Activated naive CD4-positive, alpha-beta T cell treated with anti-CD3 and anti-CD28 coated beads for 36 hours (primary cell): ENCODE measurements at regions of chr7 and their contacts with region 1.

Region 1: DNA sequence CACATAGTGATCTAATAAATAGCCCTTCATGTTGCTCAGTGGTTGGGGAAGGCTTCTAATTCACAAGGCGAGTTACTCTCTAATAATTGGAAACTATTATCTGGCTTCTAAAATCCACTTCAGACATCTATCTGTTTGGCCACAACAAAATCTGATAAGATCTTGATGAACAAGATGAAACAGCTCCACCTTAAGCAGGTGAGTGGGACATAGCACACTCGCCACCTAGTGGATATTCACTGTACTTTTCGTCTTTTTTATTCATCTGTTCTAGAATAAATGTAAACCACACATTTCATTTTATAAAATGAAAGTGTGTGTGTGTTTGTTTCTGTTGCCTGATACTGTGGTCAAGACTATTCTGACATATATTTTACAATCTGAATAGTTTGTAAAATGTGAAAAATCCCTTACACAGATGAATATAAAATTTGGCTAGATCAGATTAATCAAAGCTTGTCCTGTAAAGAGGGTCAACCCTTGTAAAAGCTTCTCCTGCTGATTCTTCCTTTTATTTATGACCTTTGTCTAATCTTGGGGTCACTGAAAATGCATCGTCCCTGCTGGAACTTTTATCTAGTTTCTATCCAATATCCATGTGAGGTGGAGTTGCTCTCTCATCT is 26.5 kb upstream of the CNTNAP2 start:
- DNase-seq: peak; percentile 14
- H3K4me3 Mint-ChIP-seq: no peak overlapping the region
- H3K27ac Mint-ChIP-seq: no peak overlapping the region
- H3K4me1 Mint-ChIP-seq: no peaks in the 10 kb centered on the region
- H3K27me3 Mint-ChIP-seq: no peaks in the 10 kb centered on the region

Region 2: DNA sequence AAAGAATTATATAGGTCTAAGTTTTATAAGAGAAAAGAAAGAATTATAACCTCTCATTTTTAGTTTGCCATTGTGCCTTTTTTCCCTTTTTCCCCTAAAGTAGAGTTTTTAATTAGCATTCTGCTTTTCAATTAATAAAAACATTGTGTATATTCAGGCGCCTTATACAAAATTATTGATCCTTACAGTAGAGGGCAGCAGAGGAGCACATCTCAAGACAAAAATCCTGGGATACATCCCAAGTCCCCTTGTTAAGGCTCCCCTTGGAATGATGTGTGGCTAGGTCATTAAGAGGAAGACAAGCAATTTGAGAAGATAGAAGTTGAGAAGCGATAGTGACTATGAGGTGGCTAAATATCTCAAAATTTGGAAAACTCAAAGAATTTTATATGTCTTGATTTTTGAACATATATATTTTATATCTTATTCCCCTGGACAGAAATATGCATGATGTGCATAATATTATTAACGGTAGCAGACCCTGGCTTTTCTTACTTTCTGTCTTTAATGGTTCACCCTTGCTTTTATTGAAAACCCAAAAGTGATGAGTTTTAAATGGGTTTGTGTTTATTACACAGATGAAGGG is 1235.2 kb before region 1 on chr7:
- CTCF ChIA-PET with region 1: no interaction called
- intact Hi-C with region 1: loop called (anchors 1 kb)
- DNase-seq: no peak
- H3K4me3 Mint-ChIP-seq: no peak overlapping the region
- H3K27ac Mint-ChIP-seq: no peak overlapping the region
- H3K4me1 Mint-ChIP-seq: no peaks in the 10 kb centered on the region
- H3K27me3 Mint-ChIP-seq: no peaks in the 10 kb centered on the region

Region 3: GRCh38 chr7:145036604-145037405 is 1053.3 kb before region 1 on chr7:
- CTCF ChIA-PET with region 1: interaction called, 7 read pairs
- intact Hi-C with region 1: loop called (anchors 1 kb)
- DNase-seq: peak; percentile 49
- H3K4me3 Mint-ChIP-seq: no peak overlapping the region
- H3K27ac Mint-ChIP-seq: no peak overlapping the region
- H3K4me1 Mint-ChIP-seq: peaks cover 3% of the 10 kb centered on the region
- H3K27me3 Mint-ChIP-seq: peaks cover 13% of the 10 kb centered on the region

Region 4: DNA sequence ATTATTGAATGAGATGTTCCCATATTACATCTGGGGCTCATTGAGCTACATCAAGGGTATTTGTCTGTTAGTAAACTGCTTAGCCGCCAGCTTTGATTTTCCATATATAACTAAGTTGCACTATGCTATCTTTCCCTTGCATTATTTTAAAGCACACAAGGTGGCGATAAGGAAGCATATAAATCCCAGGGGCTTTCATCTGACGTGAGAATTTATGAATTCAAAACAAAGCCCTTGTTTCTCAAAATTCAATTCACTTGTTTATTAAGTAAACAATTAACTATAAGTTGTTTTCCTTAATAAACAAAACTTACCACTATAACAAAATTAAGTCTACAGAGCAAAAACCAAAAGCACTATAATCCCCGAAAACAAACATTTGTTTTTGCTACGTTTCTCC is 920.2 kb before region 1 on chr7:
- CTCF ChIA-PET with region 1: no interaction called
- intact Hi-C with region 1: loop called (anchors 5 kb)
- DNase-seq: no peak
- H3K4me3 Mint-ChIP-seq: no peak overlapping the region
- H3K27ac Mint-ChIP-seq: no peak overlapping the region
- H3K4me1 Mint-ChIP-seq: no peaks in the 10 kb centered on the region
- H3K27me3 Mint-ChIP-seq: peaks cover 8% of the 10 kb centered on the region